ENCODE measurements at regions of chr10 and their contacts with region 1.

Region 1: DNA sequence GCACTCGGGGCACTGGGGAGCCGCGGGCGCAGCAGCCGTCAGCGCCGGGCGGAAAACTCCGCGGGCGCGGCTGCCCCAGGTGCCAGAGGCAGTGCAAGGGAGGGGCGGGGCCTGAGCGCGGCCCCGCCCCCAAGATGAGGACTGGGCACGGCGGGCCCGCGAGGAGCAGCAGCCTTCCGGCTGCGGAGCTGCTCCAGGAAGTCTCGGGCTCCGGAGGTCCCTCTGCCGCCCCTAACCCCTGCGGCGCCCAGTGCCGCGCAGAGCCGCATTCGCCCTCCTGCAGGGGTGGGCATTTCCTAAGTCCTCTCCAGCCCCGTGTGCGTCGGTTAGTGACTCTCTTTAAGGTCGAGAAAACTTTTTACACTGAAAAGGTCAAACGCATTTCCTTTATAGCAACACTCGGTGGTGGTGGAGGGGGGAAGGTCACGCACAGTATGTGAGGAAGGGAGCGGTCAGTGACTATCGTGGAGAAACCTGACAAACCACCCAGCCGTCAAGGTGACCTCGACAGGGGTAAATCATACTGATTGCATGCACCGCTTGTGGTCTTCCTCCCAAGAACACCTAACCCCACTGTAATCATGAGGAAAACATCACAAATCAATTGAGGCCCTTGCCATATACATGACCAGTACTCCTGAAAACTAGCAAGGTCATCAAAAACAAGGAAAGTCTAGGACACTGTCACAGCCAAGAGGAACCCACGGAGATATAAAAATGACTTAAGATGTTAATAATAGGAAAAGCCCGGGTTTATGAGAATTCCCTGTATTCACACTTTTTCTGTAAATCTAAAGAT is at the start of gene ANXA11:
- DNase-seq: peak; percentile 76 to 85 (median 81)
- ATAC-seq: peak; percentile 91
- H3K4me3 ChIP-seq: peak within 1 kb of the TSS; percentile 90
- H3K4me3 Mint-ChIP-seq: peak within 1 kb of the TSS; percentile 83 to 93 (median 88)
- H3K27ac ChIP-seq: peak within 1 kb of the TSS; percentile 94
- H3K27ac Mint-ChIP-seq: peak within 1 kb of the TSS; percentile 89 to 98 (median 96)
- H3K4me1 ChIP-seq: peaks cover 34 to 36% of the 10 kb centered on the region in 2 donors
- H3K4me1 Mint-ChIP-seq: peaks cover 41 to 69% (median 48%) of the 10 kb centered on the region in 7 donors
- H3K27me3 ChIP-seq: no peaks in the 10 kb centered on the region
- H3K27me3 Mint-ChIP-seq: no peaks in the 10 kb centered on the region
- total RNA-seq, gene ANXA11: 189 to 247 (median 231) TPM

Region 2: GRCh38 chr10:79242620-79243152 is 963.0 kb before region 1 on chr10:
- CTCF ChIA-PET with region 1: no interaction called
- POLR2A ChIA-PET with region 1: no interaction called
- intact Hi-C with region 1: loop called in 1 of 2 experiments (anchors 5 kb)
- DNase-seq: peak; percentile 6 to 71 (median 35)
- ATAC-seq: peak; percentile 39
- H3K4me3 ChIP-seq: peak overlapping the region; percentile 37
- H3K4me3 Mint-ChIP-seq: peak overlapping the region; percentile 43 to 87 (median 77)
- H3K27ac ChIP-seq: no peak overlapping the region
- H3K27ac Mint-ChIP-seq: peak overlapping the region in 1 of 9 donors; percentile 80
- H3K4me1 ChIP-seq: peaks cover 27 to 38% of the 10 kb centered on the region in 2 donors
- H3K4me1 Mint-ChIP-seq: peaks cover 39 to 58% (median 41%) of the 10 kb centered on the region in 7 donors
- H3K27me3 ChIP-seq: no peaks in the 10 kb centered on the region
- H3K27me3 Mint-ChIP-seq: no peaks in the 10 kb centered on the region

Region 3: DNA sequence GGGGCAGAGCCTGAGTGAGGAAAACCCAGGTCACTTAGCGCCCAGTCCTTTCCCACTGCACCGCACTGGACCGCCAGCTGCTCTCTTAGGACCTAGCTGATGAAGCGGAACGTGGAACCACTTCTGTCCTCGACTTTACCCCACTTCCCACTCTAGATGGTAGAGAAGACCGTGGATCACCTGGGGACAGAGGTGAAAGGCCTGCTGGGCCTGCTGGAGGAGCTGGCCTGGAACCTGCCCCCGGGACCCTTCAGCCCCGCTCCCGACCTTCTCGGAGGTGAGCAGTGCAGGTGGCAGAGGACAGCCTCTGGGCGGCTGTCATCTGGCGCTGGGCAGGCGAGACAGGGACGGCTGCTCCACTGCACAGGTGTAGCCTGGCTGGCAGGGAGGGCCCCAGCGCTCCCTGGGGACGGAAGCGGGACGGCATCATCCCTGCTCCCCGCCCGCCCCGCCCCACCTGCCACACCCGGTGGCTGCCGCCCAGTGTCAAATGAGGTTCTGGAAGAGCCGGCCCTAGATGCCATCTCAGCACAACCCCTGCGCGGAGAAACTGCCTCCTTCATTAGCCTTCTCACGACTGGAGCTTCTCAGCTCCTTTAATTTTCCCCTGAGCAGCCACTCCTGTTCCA is 61.5 kb before region 1 on chr10:
- CTCF ChIA-PET with region 1: interaction called, 24 read pairs
- POLR2A ChIA-PET with region 1: interaction called, 13 read pairs
- intact Hi-C with region 1: loop called (anchors 1 kb)
- DNase-seq: peak in 1 of 9 donors; percentile 42
- ATAC-seq: peak; percentile 60
- H3K4me3 ChIP-seq: peak overlapping the region; percentile 56
- H3K4me3 Mint-ChIP-seq: peak overlapping the region; percentile 81 to 88 (median 86)
- H3K27ac ChIP-seq: peak overlapping the region; percentile 56
- H3K27ac Mint-ChIP-seq: peak overlapping the region; percentile 50 to 93 (median 71)
- H3K4me1 ChIP-seq: peaks cover 7 to 12% of the 10 kb centered on the region in 2 donors
- H3K4me1 Mint-ChIP-seq: peaks cover 14 to 25% (median 23%) of the 10 kb centered on the region in 7 donors
- H3K27me3 ChIP-seq: no peaks in the 10 kb centered on the region
- H3K27me3 Mint-ChIP-seq: peaks cover 0 to 12% (median 3%) of the 10 kb centered on the region in 5 donors

Region 4: DNA sequence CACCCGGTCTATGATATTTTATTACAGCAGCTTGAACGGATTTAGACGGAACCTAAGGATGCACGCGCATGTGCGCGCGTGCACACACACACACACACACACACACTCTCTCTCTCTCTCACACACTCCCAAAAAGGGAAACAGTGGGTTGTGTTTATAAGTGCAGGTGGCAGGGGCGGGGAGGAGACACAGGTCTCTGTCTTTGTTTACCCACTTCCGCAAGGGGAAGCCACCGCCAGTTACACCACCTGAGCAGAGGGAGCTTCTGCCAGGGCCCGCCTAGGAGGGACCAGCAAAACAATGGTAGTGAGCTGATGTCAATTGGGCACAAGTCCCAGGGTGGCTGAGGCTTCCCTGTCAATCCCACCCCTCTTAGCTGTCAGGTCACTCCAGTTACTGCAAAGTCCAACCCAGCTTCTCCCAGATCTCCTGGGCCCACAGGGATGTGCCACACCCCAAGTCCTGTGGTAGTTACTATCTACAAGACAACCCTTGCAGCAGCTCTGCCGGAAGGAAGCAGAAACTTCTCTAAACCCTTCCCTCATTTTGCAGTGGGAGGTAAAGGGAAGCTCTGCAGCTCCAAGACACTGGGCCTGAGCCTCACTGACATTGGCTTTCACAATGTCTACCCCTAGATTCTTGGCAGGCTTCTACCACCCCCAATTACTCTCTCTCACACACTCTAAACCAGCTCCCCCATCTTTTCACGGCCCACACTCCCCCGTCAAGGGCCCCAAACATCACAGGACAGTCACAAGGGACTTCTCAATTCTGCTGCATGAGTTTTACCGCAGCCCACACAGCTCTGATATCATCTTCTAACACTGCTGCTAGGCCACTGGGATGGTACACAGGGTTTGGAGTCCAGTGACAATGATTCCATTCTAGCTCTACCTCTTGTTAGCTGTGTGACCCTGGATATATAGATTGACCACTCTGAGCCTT is 17.9 kb before region 1 on chr10:
- CTCF ChIA-PET with region 1: interaction called, 39 read pairs
- POLR2A ChIA-PET with region 1: interaction called, 223 read pairs
- intact Hi-C with region 1: loop called (anchors 1 kb)
- DNase-seq: peak; percentile 58 to 96 (median 93)
- ATAC-seq: peak; percentile 94
- H3K4me3 ChIP-seq: peak overlapping the region; percentile 37
- H3K4me3 Mint-ChIP-seq: peak overlapping the region; percentile 77 to 95 (median 85)
- H3K27ac ChIP-seq: peak overlapping the region; percentile 84
- H3K27ac Mint-ChIP-seq: peak overlapping the region; percentile 90 to 98 (median 93)
- H3K4me1 ChIP-seq: peaks cover 48 to 81% of the 10 kb centered on the region in 2 donors
- H3K4me1 Mint-ChIP-seq: peaks cover 74 to 91% (median 90%) of the 10 kb centered on the region in 7 donors
- H3K27me3 ChIP-seq: no peaks in the 10 kb centered on the region
- H3K27me3 Mint-ChIP-seq: no peaks in the 10 kb centered on the region

Region 5: DNA sequence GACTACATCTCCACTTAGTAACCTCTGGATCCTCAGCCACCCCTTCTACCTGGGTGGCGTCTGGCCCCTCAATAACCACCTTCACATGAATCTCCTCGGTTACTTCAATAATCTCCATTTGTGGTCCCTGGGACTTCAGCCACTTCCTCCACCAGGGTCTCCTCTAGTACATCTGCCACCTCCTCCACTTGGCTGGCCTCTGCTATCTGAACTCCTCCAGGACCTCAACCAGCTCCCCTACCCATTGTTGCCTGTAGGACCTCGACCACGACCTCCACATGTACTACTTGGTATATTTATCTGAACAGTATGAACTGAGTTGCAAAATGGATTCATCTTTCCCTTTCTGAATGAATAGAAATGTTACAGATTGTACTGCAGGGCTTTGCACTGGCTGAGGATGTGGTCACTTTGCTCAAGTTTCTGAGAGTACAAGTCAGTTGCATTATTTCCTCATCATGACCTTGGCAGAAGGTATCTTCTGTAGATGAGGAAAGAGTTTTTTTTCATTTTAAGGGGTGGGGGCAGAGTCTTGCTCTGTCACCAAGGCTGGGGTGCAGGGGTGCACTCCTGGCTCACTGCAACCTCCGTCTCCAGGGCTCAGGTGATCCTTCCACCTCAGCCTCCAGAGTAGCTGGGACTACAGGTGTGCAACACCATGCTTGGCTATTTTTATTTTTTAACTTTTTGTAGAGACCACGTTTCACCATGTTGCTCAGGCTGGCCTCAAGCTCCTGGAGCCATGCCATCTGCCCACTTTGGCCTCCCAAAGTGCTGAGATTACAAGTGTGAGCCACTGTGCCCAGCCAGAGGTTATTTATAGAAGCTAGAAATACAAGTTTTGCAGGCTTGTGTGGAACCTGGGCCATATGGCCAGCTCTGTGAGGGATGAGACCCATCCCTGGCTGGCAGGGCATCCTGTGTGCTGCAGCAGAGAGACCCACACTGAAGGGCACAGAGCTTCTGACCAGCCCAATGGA is 47.9 kb after region 1 on chr10:
- CTCF ChIA-PET with region 1: no interaction called
- POLR2A ChIA-PET with region 1: no interaction called
- intact Hi-C with region 1: no loop called
- DNase-seq: no peak
- ATAC-seq: peak; percentile 34
- H3K4me3 ChIP-seq: no peak overlapping the region
- H3K4me3 Mint-ChIP-seq: peak overlapping the region in 1 of 10 donors; percentile 39
- H3K27ac ChIP-seq: no peak overlapping the region
- H3K27ac Mint-ChIP-seq: peak overlapping the region in 1 of 9 donors; percentile 31
- H3K4me1 ChIP-seq: no peaks in the 10 kb centered on the region
- H3K4me1 Mint-ChIP-seq: peaks cover 0 to 21% (median 0%) of the 10 kb centered on the region in 7 donors
- H3K27me3 ChIP-seq: no peaks in the 10 kb centered on the region
- H3K27me3 Mint-ChIP-seq: peaks cover 7 to 16% (median 12%) of the 10 kb centered on the region in 5 donors

Region 6: GRCh38 chr10:80459047-80459931 is 253.6 kb after region 1 on chr10:
- CTCF ChIA-PET with region 1: no interaction called
- POLR2A ChIA-PET with region 1: no interaction called
- intact Hi-C with region 1: loop called (anchors 5 kb)
- DNase-seq: peak in 7 of 9 donors; percentile 53 to 66 (median 55)
- ATAC-seq: peak; percentile 66
- H3K4me3 ChIP-seq: peak overlapping the region; percentile 87
- H3K4me3 Mint-ChIP-seq: peak overlapping the region; percentile 79 to 99 (median 98)
- H3K27ac ChIP-seq: peak overlapping the region; percentile 84
- H3K27ac Mint-ChIP-seq: peak overlapping the region; percentile 87 to 99 (median 98)
- H3K4me1 ChIP-seq: peaks cover 75 to 79% of the 10 kb centered on the region in 2 donors
- H3K4me1 Mint-ChIP-seq: peaks cover 77 to 85% (median 83%) of the 10 kb centered on the region in 7 donors
- H3K27me3 ChIP-seq: no peaks in the 10 kb centered on the region
- H3K27me3 Mint-ChIP-seq: no peaks in the 10 kb centered on the region

Region 7: DNA sequence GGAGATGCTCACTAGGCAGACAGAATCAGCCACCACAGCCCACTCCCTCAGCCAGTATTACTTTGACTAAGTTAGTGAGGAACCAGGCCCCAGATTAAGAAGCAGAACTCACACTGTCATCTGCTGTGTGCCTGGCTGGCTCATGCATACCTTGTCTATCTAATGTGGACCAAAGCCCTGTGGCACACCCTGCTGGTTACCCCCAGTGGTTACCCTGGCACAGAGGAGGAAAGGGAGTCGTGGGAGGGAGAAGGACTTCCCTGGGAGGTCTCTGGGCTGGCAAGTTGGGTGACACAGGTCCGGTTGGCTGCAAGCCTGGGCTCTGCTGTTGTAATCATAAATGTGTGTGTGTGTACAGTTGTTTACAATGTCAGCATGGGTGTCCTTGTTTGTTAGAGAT is 324.6 kb after region 1 on chr10:
- CTCF ChIA-PET with region 1: no interaction called
- POLR2A ChIA-PET with region 1: no interaction called
- intact Hi-C with region 1: loop called in 1 of 2 experiments (anchors 10 kb)
- DNase-seq: peak in 6 of 9 donors; percentile 38 to 56 (median 46)
- ATAC-seq: peak; percentile 77
- H3K4me3 ChIP-seq: no peak overlapping the region
- H3K4me3 Mint-ChIP-seq: peak overlapping the region; percentile 56 to 85 (median 73)
- H3K27ac ChIP-seq: peak overlapping the region; percentile 60
- H3K27ac Mint-ChIP-seq: peak overlapping the region; percentile 88 to 97 (median 92)
- H3K4me1 ChIP-seq: peaks cover 39 to 74% of the 10 kb centered on the region in 2 donors
- H3K4me1 Mint-ChIP-seq: peaks cover 55 to 77% (median 73%) of the 10 kb centered on the region in 7 donors
- H3K27me3 ChIP-seq: no peaks in the 10 kb centered on the region
- H3K27me3 Mint-ChIP-seq: no peaks in the 10 kb centered on the region

Measured in naive thymus-derived CD4-positive, alpha-beta T cell (primary cell).